Calu3 (cell line): ENCODE measurements at regions of chr1 and their contacts with region 1.

Region 1: GRCh38 chr1:200620273-200621131 is at the start of gene KIF14:
- DNase-seq: peak; percentile 98
- H3K4me3 Mint-ChIP-seq: peak within 1 kb of the TSS; percentile 97
- H3K27ac Mint-ChIP-seq: peak within 1 kb of the TSS; percentile 97
- H3K4me1 Mint-ChIP-seq: peaks cover 18% of the 10 kb centered on the region
- H3K27me3 Mint-ChIP-seq: no peaks in the 10 kb centered on the region
- CTCF ChIP-seq: no peak
- total RNA-seq, gene KIF14: 17.2 and 20.7 TPM in 2 replicates

Region 2: DNA sequence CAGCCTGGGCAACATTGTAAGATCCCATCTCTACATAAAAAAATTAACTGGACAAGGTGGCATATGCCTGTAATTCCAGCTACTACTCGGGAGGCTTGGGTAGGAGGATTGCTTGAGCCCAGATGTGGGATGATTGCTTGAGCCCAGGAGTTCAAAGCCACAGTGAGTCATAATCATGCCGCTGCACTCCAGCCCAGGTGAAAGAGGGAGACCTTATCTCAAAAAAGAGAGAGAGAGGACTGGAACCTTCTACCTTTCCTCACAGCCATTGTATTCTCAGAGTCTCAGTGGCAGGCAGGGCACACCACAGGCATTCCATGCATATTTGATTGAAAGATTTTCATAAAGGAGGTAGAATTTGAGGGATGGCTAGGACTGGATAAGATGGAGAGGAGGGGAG is 78.3 kb before region 1 on chr1:
- CTCF ChIA-PET with region 1: no interaction called
- intact Hi-C with region 1: no loop called
- DNase-seq: peak; percentile 15
- H3K4me3 Mint-ChIP-seq: no peak overlapping the region
- H3K27ac Mint-ChIP-seq: no peak overlapping the region
- H3K4me1 Mint-ChIP-seq: peaks cover 9% of the 10 kb centered on the region
- H3K27me3 Mint-ChIP-seq: no peaks in the 10 kb centered on the region
- CTCF ChIP-seq: no peak

Region 3: DNA sequence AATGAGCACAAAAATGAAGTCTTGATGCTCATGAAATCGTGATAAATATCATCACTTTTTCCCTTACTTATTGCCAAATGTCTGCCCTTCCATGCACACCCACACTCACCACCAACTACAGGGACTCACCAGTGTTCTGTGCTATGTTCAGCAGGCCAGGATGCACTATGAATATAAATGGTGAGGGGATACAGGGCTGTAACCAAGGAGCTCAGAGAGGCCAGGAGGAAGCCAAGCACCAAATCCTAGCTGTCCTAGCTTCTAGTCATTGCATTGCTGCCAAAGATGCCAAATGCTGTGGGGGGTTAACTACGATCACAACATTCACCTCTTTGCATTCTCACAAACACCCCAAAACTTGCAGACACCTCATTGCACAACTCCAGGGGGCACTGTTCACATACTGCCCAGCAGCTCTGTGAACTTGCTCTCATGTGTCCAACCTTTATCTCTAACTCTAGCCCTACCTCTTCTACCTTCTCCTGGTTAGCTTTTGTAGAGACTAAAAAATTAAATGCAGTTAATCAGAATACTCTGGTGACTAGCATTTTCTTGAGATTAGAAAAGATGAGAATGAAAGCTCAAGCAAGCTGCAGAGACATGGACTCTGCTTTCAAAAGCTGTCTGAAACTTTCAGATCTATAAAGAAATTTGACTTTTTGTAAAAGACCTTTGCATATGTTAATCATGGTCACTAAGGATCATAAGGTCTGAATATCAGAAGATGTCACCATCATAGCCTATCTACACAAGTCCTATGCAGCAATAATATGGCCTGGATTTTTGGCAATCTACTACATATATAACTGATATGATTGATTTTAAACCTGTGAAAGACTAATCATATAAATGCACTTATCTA is 14.0 kb after region 1 on chr1:
- CTCF ChIA-PET with region 1: interaction called, 14 read pairs
- intact Hi-C with region 1: no loop called
- DNase-seq: no peak
- H3K4me3 Mint-ChIP-seq: no peak overlapping the region
- H3K27ac Mint-ChIP-seq: no peak overlapping the region
- H3K4me1 Mint-ChIP-seq: peaks cover 7% of the 10 kb centered on the region
- H3K27me3 Mint-ChIP-seq: no peaks in the 10 kb centered on the region
- CTCF ChIP-seq: no peak

Region 4: GRCh38 chr1:200739499-200740290 is 119.2 kb after region 1 on chr1:
- CTCF ChIA-PET with region 1: no interaction called
- intact Hi-C with region 1: loop called (anchors 2 kb)
- DNase-seq: peak; percentile 39
- H3K4me3 Mint-ChIP-seq: peak overlapping the region; percentile 92
- H3K27ac Mint-ChIP-seq: peak overlapping the region; percentile 88
- H3K4me1 Mint-ChIP-seq: peaks cover 31% of the 10 kb centered on the region
- H3K27me3 Mint-ChIP-seq: no peaks in the 10 kb centered on the region
- CTCF ChIP-seq: no peak

Region 5: DNA sequence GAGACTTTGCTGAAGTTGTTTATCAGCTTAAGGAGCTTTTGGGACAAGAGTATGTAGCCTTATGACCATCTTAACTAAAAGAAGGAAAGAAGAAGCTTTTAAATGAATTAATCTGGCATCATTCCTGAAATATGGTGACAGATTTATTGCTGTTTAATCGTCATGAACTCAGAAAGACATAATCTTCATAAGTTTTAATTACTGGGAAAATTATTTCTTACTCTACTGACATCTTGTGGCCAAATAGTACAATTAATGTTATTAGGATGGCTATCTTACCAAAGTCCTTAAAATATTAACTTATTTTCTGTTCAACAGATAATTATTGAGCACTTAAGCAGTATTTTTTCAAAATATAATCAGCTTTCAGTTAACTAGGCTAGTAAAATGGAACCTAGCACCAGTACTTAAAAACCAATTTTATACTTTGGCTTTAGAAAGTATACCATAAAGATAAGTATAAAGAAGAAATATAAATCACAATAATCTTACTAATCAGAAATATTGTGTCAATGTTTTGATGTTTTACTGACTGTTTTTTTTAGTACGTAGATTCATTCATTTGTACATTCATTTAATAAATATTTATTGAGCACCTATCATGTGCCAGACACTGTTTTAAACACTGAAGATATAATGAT is 217.5 kb after region 1 on chr1:
- CTCF ChIA-PET with region 1: interaction called, 3 read pairs
- intact Hi-C with region 1: loop called (anchors 1 kb)
- DNase-seq: no peak
- H3K4me3 Mint-ChIP-seq: no peak overlapping the region
- H3K27ac Mint-ChIP-seq: no peak overlapping the region
- H3K4me1 Mint-ChIP-seq: no peaks in the 10 kb centered on the region
- H3K27me3 Mint-ChIP-seq: no peaks in the 10 kb centered on the region
- CTCF ChIP-seq: peak; percentile 27

Region 6: DNA sequence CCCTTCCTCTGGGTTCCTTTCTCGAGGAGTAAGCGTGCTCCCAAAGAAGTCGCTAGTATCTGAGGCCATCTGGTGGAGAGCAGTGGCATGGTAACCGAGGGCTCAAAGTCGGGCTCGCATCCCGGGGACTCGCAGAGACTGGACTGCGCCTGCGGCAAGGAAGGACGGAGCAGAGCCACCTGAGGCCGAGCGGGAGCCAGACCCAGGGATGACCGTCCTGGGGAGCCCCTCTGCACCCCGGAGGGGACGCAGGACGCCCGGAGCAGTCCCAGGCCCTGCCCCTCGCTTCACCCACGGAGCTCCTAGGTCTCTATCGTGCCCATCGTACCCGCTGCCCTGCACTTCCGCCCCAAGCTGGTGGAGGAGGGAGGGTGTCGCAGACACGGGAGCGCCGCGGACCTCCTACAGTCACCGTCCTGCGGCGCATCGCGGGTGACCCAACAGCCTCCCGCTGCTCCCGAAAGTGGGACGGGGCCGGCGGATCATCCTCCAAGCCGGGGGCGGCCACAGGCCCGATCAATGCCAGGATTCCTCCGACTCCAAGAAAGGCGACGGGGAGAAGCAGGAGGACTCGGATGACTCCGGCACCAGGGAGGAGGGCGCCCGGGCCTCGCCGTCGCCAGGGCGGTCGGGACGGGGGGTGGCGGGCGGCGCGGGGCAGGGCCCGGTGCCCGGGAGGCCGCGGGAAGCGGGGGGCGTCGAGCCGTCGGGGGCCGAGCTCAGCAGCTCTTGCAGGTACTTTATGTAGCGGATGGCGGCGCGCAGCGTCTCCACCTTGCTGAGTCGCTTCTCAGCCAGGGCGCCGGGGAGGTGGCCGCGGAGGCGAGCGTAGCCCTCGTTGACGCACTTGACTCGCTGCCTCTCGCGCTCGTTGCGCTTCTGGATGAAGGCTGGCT is 494.0 kb after region 1 on chr1:
- CTCF ChIA-PET with region 1: no interaction called
- intact Hi-C with region 1: loop called (anchors 5 kb)
- DNase-seq: peak; percentile 95
- H3K4me3 Mint-ChIP-seq: peak overlapping the region; percentile 90
- H3K27ac Mint-ChIP-seq: peak overlapping the region; percentile 81
- H3K4me1 Mint-ChIP-seq: no peaks in the 10 kb centered on the region
- H3K27me3 Mint-ChIP-seq: peaks cover 80% of the 10 kb centered on the region
- CTCF ChIP-seq: peak; percentile 72